Activated CD8-positive, alpha-beta T cell treated with anti-CD3 and anti-CD28 coated beads, Interleukin-2, amount 10 ng/mL, durations not matched to agents 7 days and 5 days (primary cell): ENCODE measurements at regions of chr2 and their contacts with region 1.

Region 1: GRCh38 chr2:3423492-3424175 is 44.1 kb downstream of the TRAPPC12 start:
- DNase-seq: peak; percentile 77
- ATAC-seq: peak; percentile 72
- H3K4me3 Mint-ChIP-seq: no peak overlapping the region
- H3K27ac Mint-ChIP-seq: no peak overlapping the region
- H3K4me1 Mint-ChIP-seq: no peaks in the 10 kb centered on the region
- H3K27me3 Mint-ChIP-seq: no peaks in the 10 kb centered on the region

Region 2: DNA sequence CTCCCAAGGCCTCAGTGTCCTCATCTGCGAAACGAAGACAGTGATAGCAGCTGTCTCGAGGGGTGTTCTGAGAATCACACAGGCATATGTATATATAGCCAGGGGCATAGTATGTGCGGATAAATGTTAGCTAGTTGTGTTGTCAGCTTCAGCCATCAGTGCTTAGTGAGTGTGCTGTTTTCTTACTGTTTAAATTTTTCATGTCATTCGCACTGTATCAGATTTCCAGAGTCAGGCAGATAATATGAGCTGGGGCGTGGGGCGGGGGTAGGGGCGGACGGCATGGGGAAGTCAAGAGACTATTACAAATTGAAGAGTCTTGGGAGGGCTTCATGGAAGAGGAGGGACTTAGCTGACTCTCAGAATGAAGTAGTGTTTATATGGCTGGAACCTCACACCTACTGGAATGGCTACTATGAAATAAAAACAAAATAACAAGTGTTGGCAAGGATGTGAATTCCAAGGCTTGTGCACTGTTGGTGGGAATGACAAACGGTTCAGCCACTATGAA is 37.1 kb before region 1 on chr2:
- CTCF ChIA-PET with region 1: interaction called, 11 read pairs
- POLR2A ChIA-PET with region 1: no interaction called
- DNase-seq: no peak
- ATAC-seq: no peak
- H3K4me3 Mint-ChIP-seq: no peak overlapping the region
- H3K27ac Mint-ChIP-seq: no peak overlapping the region
- H3K4me1 Mint-ChIP-seq: peaks cover 12% of the 10 kb centered on the region
- H3K27me3 Mint-ChIP-seq: no peaks in the 10 kb centered on the region

Region 3: DNA sequence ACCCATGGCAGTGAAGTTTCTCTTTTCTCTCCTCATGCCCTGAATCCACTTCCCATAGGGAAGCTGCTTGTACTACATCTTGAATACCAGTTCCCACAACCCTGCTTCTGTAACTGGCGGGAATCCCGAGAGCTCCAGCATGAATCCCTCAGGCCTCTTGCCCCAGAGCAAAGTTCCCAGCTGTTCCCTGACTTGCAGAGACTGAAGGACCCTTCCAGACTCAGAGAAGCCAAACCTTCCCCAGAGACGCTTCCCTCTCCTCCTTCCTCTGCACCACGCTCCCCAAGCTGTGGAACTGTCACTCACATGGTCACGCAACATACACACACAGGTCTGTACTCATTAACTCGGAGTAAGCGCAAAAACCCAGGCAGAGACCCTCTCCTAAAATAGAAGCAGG is 17.8 kb before region 1 on chr2:
- CTCF ChIA-PET with region 1: interaction called, 18 read pairs
- POLR2A ChIA-PET with region 1: no interaction called
- DNase-seq: no peak
- ATAC-seq: no peak
- H3K4me3 Mint-ChIP-seq: no peak overlapping the region
- H3K27ac Mint-ChIP-seq: no peak overlapping the region
- H3K4me1 Mint-ChIP-seq: no peaks in the 10 kb centered on the region
- H3K27me3 Mint-ChIP-seq: no peaks in the 10 kb centered on the region

Region 4: DNA sequence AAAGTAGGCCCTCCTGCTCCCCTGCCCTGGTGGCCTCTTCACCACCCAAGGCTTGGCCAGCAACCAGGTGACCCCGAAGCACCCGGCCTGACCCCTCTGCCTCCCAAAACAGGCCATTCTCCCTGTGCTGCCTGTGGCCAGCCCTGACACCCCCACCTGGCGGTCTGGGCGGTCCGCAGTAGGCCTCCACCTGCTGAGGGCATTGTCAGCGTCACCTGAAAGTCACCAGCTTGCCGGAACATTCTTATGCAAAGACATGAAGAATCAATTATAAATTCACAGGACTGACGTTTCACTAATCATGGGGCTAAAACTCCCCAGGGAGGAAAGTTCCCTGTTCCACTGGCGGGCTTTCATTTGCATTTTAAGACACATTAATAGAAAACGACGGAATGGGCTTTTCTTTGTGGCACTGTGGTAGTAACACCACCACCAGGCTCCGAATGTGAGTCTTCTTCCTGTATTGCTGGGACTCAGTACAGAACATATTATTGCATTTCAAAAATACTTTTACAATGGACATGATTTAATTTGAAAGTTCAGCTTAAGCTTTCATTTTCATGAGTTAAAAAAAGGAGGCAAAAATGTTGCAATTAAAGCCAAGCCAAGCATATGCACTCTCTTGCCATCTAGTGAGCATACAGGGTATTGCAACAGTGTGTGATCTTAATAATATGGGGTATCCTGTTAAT is 38.3 kb after region 1 on chr2:
- CTCF ChIA-PET with region 1: interaction called, 26 read pairs
- POLR2A ChIA-PET with region 1: no interaction called
- DNase-seq: peak; percentile 64
- ATAC-seq: peak; percentile 51
- H3K4me3 Mint-ChIP-seq: no peak overlapping the region
- H3K27ac Mint-ChIP-seq: peak overlapping the region; percentile 60
- H3K4me1 Mint-ChIP-seq: peaks cover 9% of the 10 kb centered on the region
- H3K27me3 Mint-ChIP-seq: no peaks in the 10 kb centered on the region

Region 5: DNA sequence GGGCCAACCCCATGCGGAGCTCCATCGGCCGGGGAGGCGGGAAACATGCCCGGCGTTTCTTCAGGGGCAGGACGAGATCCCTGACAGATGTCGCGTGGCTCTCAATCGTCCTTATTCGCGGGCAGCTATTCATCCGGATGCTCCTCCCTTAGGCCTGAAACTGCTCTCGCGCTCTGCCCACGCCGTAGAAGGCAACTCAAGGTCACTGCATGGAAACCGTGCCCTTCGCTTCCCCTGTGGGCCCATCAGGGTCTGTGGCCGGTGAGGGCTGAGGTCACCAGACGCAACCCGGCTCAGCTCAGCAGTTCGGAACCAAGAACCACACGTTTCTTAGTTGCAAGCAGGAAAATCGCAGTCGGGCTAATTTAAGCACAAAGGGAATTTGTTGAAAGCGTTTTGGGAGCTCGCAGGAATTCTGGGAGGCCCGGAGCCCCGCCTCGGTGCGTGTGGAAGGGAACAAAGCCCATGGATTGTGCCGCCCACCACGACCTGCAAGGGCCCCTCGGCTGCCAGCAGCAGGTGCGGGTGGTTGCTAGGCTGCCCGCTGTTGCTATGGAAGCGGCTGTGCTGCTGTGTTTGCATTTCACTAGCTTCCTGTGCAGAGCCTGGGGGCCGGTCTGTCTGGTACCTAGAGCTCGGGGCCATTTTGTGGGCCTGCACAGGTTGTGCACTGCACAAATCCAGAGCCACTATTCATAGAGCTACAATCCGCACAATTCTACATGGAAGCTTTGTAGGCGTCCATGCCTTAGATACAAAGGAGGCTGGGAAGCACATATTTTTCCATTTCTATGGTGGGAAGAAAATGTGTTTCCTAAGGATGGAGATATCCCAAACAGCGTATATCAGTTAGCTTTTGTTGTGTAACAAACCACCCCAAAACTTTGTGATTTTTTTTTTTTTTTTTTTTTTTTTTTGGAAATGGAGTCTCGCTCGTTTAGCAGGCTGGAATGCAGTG is 228.3 kb after region 1 on chr2:
- CTCF ChIA-PET with region 1: interaction called, 27 read pairs
- POLR2A ChIA-PET with region 1: no interaction called
- DNase-seq: peak; percentile 84
- ATAC-seq: peak; percentile 83
- H3K4me3 Mint-ChIP-seq: peak overlapping the region; percentile 69
- H3K27ac Mint-ChIP-seq: peak overlapping the region; percentile 88
- H3K4me1 Mint-ChIP-seq: peaks cover 13% of the 10 kb centered on the region
- H3K27me3 Mint-ChIP-seq: peaks cover 3% of the 10 kb centered on the region